ENCODE measurements at regions of chr17 and their contacts with region 1.

Region 1: GRCh38 chr17:48804925-48805411 is 12.1 kb downstream of the TTLL6 start:
- DNase-seq: peak; percentile 78
- H3K4me3 Mint-ChIP-seq: no peak overlapping the region
- H3K27ac Mint-ChIP-seq: no peak overlapping the region
- H3K4me1 Mint-ChIP-seq: no peaks in the 10 kb centered on the region
- H3K27me3 Mint-ChIP-seq: peaks cover 5% of the 10 kb centered on the region

Region 2: GRCh38 chr17:48816774-48817590 is 12.0 kb after region 1 on chr17 and contains the start of gene TTLL6:
- CTCF ChIA-PET with region 1: interaction called, 11 read pairs
- intact Hi-C with region 1: no loop called
- DNase-seq: peak; percentile 74
- H3K4me3 Mint-ChIP-seq: peak within 1 kb of the TSS; percentile 71
- H3K27ac Mint-ChIP-seq: no peak within 1 kb of the TSS
- H3K4me1 Mint-ChIP-seq: peaks cover 20% of the 10 kb centered on the region
- H3K27me3 Mint-ChIP-seq: peaks cover 28% of the 10 kb centered on the region
- total RNA-seq, gene TTLL6: not detected